ENCODE measurements at regions of chr15 and their contacts with region 1.

Region 1: DNA sequence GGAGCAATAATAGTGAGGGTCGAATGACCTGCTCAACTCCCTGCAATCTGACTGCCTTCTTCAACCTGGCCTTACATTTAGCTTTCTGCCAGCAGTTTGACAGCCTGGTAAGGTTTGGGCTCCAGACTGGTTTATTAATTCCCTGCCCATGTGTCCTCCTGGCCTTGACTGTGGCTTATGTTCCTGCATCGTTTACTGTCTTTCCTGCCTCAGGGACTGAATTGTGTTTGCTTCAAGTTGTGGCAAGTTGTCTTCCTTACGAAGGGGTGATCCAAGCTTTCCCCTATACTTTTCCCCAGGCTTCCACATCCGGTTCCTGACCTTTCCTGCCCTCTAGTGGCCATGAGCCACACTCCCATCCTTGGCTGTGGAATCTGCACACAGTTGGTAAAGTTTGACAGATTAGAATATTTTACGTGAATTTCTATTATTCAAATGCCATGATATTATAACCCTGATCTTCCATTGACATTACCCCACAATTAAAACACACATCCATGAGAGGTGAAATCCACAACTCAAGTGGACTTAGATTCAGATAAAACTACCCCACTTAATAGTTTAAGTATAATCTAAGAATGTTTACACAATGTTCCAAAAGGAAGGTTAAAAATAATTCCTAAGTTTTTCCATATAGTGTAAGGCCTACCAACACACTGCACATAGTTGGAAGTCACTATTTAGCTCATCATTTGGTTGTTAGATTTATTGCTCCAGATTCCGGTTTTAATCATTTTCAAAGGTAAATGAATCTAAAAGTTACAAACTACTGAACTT is 95.7 kb downstream of the NEDD4 start:
- DNase-seq: no peak
- H3K4me3 Mint-ChIP-seq: no peak overlapping the region
- H3K27ac Mint-ChIP-seq: no peak overlapping the region
- H3K4me1 Mint-ChIP-seq: peaks cover 4% of the 10 kb centered on the region
- H3K27me3 Mint-ChIP-seq: peaks cover 3% of the 10 kb centered on the region

Region 2: GRCh38 chr15:55649054-55649423 is 248.7 kb before region 1 on chr15:
- intact Hi-C with region 1: loop called (anchors 1 kb)
- DNase-seq: no peak
- H3K4me3 Mint-ChIP-seq: no peak overlapping the region
- H3K27ac Mint-ChIP-seq: no peak overlapping the region
- H3K4me1 Mint-ChIP-seq: no peaks in the 10 kb centered on the region
- H3K27me3 Mint-ChIP-seq: peaks cover 7% of the 10 kb centered on the region

Measured in activated T-helper 1 cell treated with anti-CD3 and anti-CD28 coated beads, Interleukin-12 subunit alpha, Interleukin-12 subunit beta, Interleukin-2, Interleukin-4 antibody, amounts not matched to agents 30 ng/mL and 10 ng/mL and 1 ng/mL, durations not matched to agents 14 hours and 24 hours and 36 hours (primary cell).